Gastrocnemius medialis (tissue), 4 donors: ENCODE measurements at regions of chr2 and their contacts with region 1.

Region 1: GRCh38 chr2:109173311-109174171 is 44.5 kb downstream of the SH3RF3 start:
- DNase-seq: peak; percentile 82 to 91
- ATAC-seq: peak; percentile 81 to 90
- H3K4me3 ChIP-seq: no peak overlapping the region
- H3K27ac ChIP-seq: peak overlapping the region; percentile 72 to 84 (median 83)
- H3K4me1 ChIP-seq: peaks cover 68 to 74% of the 10 kb centered on the region in 2 donors
- H3K27me3 ChIP-seq: no peaks in the 10 kb centered on the region
- CTCF ChIP-seq: no peak
- POLR2A ChIP-seq: peak; percentile 44 to 50

Region 2: GRCh38 chr2:109128048-109128465 is 45.5 kb before region 1 on chr2:
- in situ Hi-C with region 1: no loop called
- intact Hi-C with region 1: loop called (anchors 5 kb)
- DNase-seq: peak; percentile 71 to 75
- ATAC-seq: peak; percentile 71 to 78
- H3K4me3 ChIP-seq: peak overlapping the region; percentile 63 to 82 (median 70)
- H3K27ac ChIP-seq: peak overlapping the region; percentile 59 to 79 (median 67)
- H3K4me1 ChIP-seq: peaks cover 4 to 7% of the 10 kb centered on the region in 2 donors
- H3K27me3 ChIP-seq: no peaks in the 10 kb centered on the region
- CTCF ChIP-seq: peak; percentile 91 to 95 (median 94)
- POLR2A ChIP-seq: peak; percentile 56 to 61

Region 3: GRCh38 chr2:109185821-109186570 is 12.5 kb after region 1 on chr2:
- in situ Hi-C with region 1: no loop called
- intact Hi-C with region 1: loop called (anchors 1 kb)
- DNase-seq: peak; percentile 61 to 84
- ATAC-seq: peak; percentile 83 to 90
- H3K4me3 ChIP-seq: peak overlapping the region in 1 of 4 donors; percentile 2
- H3K27ac ChIP-seq: peak overlapping the region; percentile 82 to 96 (median 89)
- H3K4me1 ChIP-seq: peaks cover 27 to 40% of the 10 kb centered on the region in 2 donors
- H3K27me3 ChIP-seq: no peaks in the 10 kb centered on the region
- CTCF ChIP-seq: peak in 2 of 5 experiments; percentile 6 to 27
- POLR2A ChIP-seq: peak in 1 of 2 donors; percentile 45

Region 4: GRCh38 chr2:109242654-109243331 is 69.3 kb after region 1 on chr2:
- in situ Hi-C with region 1: no loop called
- intact Hi-C with region 1: loop called (anchors 5 kb)
- DNase-seq: peak in 1 of 2 donors; percentile 52
- ATAC-seq: peak; percentile 73 to 83
- H3K4me3 ChIP-seq: no peak overlapping the region
- H3K27ac ChIP-seq: peak overlapping the region; percentile 72 to 82 (median 76)
- H3K4me1 ChIP-seq: peaks cover 40 to 56% of the 10 kb centered on the region in 2 donors
- H3K27me3 ChIP-seq: no peaks in the 10 kb centered on the region
- CTCF ChIP-seq: no peak
- POLR2A ChIP-seq: peak in 1 of 2 donors; percentile 19

Region 5: DNA sequence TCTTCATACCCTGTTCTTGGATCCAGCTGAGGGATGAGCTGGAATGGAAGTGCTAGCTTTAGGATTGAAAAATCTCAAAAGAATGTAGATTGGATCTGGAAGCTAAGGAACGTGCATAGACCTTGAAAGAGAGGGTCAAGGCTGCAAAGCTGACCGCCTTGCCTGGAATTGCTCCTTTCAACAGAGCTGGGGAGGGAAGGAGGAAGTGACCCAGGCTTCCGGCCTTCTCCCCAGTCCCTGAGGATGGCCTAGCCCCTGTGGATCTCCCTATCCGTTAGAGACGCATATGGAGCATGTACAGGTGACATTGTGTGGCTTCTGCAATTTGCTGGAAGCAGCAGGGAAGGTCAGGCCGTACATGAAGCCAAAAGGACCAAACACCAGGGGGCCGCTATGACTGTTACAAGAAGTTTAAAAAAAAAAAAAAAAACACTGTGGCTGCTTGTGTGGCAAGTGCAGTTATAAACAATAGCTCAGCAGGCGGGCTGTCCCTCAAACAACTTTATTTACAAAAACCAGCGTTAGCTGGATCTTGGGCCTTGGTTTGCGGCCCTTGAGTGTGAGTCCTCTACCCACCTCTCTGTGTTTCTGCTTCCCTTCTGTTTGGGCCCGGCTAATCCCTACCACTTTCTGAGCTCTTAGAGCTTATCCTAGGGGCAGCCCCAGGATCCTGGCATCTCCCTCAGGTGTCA is 212.6 kb after region 1 on chr2:
- in situ Hi-C with region 1: no loop called
- intact Hi-C with region 1: no loop called
- DNase-seq: no peak
- ATAC-seq: no peak
- H3K4me3 ChIP-seq: no peak overlapping the region
- H3K27ac ChIP-seq: no peak overlapping the region
- H3K4me1 ChIP-seq: peaks cover 27 to 36% of the 10 kb centered on the region in 2 donors
- H3K27me3 ChIP-seq: no peaks in the 10 kb centered on the region
- CTCF ChIP-seq: no peak
- POLR2A ChIP-seq: no peak

Region 6: GRCh38 chr2:109448946-109449788 is 275.6 kb after region 1 on chr2:
- in situ Hi-C with region 1: no loop called
- intact Hi-C with region 1: loop called (anchors 5 kb)
- DNase-seq: peak; percentile 83 to 90
- ATAC-seq: peak; percentile 88 to 89
- H3K4me3 ChIP-seq: no peak overlapping the region
- H3K27ac ChIP-seq: peak overlapping the region; percentile 72 to 88 (median 76)
- H3K4me1 ChIP-seq: peaks cover 40 to 54% of the 10 kb centered on the region in 2 donors
- H3K27me3 ChIP-seq: no peaks in the 10 kb centered on the region
- CTCF ChIP-seq: no peak
- POLR2A ChIP-seq: no peak